ENCODE measurements at regions of chr3 and their contacts with region 1.

Region 1: GRCh38 chr3:149936812-149937233 is 33.9 kb downstream of the PFN2 start:
- DNase-seq: peak; percentile 33 to 56
- ATAC-seq: peak; percentile 90 to 94
- H3K4me3 ChIP-seq: no peak overlapping the region
- H3K27ac ChIP-seq: no peak overlapping the region
- H3K4me1 ChIP-seq: no peaks in the 10 kb centered on the region
- CTCF ChIP-seq: peak; percentile 80
- EP300 ChIP-seq: no peak
- POLR2A ChIP-seq: no peak
- RAD21 ChIP-seq: peak; percentile 80 to 90

Region 2: DNA sequence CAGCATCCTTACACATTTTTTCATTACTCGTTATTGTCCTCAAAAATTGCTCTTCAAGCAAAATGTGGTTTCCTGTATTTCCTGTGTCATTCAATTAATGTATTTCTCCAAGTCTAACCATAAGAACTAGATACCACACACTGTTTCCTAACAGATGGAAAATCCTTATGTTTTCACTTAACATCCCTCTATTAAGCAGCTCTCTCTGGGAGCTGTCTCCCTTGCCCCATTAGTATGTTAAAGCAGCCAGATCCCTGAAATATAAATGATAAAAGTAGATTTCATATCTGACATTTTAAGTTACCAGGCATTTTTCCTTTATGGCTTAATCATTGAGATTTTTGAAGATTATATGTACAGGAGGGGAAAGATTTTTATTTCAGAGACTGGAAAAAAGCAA is 18.0 kb after region 1 on chr3:
- CTCF ChIA-PET with region 1: interaction called, 11 read pairs
- POLR2A ChIA-PET with region 1: no interaction called
- DNase-seq: no peak
- ATAC-seq: no peak
- H3K4me3 ChIP-seq: no peak overlapping the region
- H3K27ac ChIP-seq: no peak overlapping the region
- H3K4me1 ChIP-seq: peaks cover 15% of the 10 kb centered on the region
- CTCF ChIP-seq: no peak
- EP300 ChIP-seq: no peak
- POLR2A ChIP-seq: no peak
- RAD21 ChIP-seq: no peak

Measured in A549 (cell line).